HEK293 (cell line): ENCODE measurements at regions of chr2 and their contacts with region 1.

Region 1: GRCh38 chr2:68196120-68196716 is 38.5 kb downstream of the PNO1 start:
- H3K4me3 ChIP-seq: no peak overlapping the region
- H3K27ac ChIP-seq: no peak overlapping the region
- H3K4me1 ChIP-seq: peaks cover 10% of the 10 kb centered on the region; the same call in 1 of the 2 replicates
- CTCF ChIP-seq: no peak

Region 2: DNA sequence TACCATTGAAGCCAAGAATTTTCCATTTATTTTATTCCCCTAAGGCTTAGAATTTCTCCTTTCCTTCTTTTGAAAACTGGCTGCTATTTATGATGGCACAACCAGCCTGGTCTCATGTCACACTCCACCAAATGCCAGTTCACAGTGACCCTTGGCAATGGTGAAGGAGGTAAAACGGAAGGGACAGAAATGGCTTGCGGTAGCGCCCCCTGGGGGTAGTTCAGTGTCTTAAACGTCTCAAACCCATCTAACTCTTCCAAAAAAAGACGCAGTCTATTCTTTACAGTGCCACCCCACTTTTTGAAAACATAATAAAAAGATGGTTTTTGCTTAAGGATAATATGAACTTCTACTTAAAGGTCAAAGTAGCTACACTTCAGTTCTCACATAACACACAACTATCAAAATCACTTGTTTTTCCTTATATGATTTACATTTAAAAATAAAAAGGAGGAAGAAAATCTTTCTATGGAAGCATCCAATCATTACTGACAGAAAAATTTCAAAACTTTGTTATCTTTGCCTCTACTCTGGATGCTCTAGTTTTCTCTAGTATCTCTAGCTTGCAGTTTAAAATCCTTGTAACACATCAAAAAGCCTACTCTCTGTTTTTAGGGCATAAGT is 10.6 kb before region 1 on chr2:
- CTCF ChIA-PET with region 1: interaction called, 45 read pairs
- POLR2A ChIA-PET with region 1: no interaction called
- H3K4me3 ChIP-seq: no peak overlapping the region
- H3K27ac ChIP-seq: no peak overlapping the region
- H3K4me1 ChIP-seq: peaks cover 5% of the 10 kb centered on the region
- CTCF ChIP-seq: no peak

Region 3: GRCh38 chr2:68214381-68214780 is 18.2 kb after region 1 on chr2:
- CTCF ChIA-PET with region 1: interaction called, 22 read pairs
- POLR2A ChIA-PET with region 1: no interaction called
- H3K4me3 ChIP-seq: no peak overlapping the region
- H3K27ac ChIP-seq: no peak overlapping the region
- H3K4me1 ChIP-seq: peaks cover 17% of the 10 kb centered on the region
- CTCF ChIP-seq: no peak

Region 4: DNA sequence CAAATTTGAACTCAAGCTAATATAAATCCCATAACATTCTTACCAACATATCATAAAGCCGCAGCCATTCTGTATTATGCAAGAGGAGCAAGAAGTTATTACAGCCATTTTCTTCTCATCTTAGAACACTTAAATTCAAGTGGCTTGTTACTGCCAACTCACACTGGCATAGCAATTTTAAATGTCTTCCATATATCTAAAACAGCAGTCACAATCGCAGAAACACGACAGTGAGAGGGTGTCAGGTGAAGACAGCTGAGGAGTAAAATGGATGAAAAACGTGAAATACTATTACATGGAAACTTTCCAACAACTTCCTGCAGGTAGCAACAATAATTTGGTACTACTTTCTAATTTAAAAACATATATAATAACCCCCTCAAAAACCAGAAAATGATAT is 38.2 kb after region 1 on chr2:
- CTCF ChIA-PET with region 1: interaction called, 14 read pairs
- POLR2A ChIA-PET with region 1: no interaction called
- H3K4me3 ChIP-seq: no peak overlapping the region
- H3K27ac ChIP-seq: no peak overlapping the region
- H3K4me1 ChIP-seq: peaks cover 34% of the 10 kb centered on the region
- CTCF ChIP-seq: no peak

Region 5: GRCh38 chr2:68251187-68251854 is 55.1 kb after region 1 on chr2:
- CTCF ChIA-PET with region 1: interaction called, 13 read pairs
- POLR2A ChIA-PET with region 1: interaction called, 8 read pairs
- H3K4me3 ChIP-seq: peak overlapping the region; percentile 92
- H3K27ac ChIP-seq: peak overlapping the region; percentile 93
- H3K4me1 ChIP-seq: peaks cover 30% of the 10 kb centered on the region
- CTCF ChIP-seq: peak; percentile 75

Region 6: DNA sequence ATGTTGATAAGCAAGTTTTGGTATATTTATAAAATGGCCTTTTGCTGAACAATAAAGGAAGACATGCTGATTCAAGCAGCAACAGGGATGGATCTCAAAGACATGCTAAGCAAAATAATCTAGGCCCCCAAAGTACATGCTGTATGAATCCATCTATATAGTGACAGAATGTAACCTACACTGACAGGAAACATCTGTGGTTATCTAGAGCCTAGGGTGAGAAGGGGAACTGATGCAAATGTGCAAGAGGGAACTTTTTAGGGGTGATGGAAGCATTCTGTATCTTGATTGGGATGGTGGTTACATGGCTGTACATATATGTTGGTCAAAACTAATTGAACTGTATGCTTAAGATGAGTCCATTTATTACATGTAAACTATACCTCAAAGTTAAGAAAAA is 99.3 kb after region 1 on chr2:
- CTCF ChIA-PET with region 1: interaction called, 20 read pairs
- POLR2A ChIA-PET with region 1: no interaction called
- H3K4me3 ChIP-seq: no peak overlapping the region
- H3K27ac ChIP-seq: no peak overlapping the region
- H3K4me1 ChIP-seq: no peaks in the 10 kb centered on the region
- CTCF ChIP-seq: no peak